ENCODE measurements at regions of chr6 and their contacts with region 1.

Region 1: GRCh38 chr6:79117752-79118151 is 39.7 kb upstream of the PHIP start:
- DNase-seq: no peak
- CTCF ChIP-seq: no peak

Region 2: DNA sequence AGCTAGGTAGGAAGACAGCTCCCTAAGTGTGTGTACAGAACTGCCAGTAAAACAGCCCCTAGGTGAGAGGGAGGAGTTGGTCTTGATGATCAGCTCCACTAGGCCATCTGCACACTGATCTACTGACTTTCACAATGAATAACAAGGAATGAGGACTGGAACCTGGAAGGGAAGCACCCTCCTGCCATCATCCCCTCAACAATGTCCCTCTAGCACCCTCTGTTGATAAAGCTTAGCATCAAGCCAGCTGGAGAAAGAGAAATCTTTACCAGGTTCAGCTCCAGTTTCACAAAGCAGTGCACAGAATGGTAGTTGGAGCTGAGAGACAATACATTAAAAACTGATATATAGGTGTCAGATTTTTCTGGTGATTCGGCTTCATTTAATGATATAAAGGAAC is 307.6 kb before region 1 on chr6:
- in situ Hi-C with region 1: no loop called
- DNase-seq: peak; percentile 21
- CTCF ChIP-seq: peak; percentile 48

Region 3: DNA sequence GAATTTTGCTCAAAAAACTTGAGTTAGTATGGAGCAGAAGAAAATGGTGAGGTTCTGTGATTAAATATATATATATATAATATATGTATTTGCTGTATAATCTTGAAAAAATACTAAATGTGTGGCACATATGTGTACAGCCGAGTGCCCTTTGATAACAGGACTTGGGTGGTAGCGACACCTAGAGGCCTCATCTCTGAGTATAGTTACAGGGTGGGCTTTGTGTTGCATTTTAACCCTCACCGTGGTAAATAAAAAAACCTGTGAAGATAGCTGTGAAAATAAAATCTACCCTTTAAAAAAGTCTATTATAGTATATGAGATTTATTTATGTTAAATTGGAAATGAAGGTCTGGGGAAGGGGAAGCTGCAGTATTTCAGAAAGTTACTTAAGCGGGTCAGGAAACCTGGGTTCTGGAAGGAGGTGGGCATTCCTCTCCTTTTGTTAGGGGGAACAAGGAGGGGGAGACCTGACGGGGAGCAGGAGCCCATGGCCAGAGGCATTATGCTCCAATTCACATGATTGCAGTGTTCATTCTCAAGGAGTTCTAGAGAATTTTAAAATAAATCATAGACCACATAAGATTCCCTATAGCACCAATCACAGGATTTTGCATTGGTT is 596.1 kb after region 1 on chr6:
- in situ Hi-C with region 1: loop called (anchors 25 kb)
- DNase-seq: peak; percentile 17
- CTCF ChIP-seq: peak; percentile 73